Right ventricle myocardium inferior (tissue), 1 donor: ENCODE measurements at regions of chr3 and their contacts with region 1.

Region 1: DNA sequence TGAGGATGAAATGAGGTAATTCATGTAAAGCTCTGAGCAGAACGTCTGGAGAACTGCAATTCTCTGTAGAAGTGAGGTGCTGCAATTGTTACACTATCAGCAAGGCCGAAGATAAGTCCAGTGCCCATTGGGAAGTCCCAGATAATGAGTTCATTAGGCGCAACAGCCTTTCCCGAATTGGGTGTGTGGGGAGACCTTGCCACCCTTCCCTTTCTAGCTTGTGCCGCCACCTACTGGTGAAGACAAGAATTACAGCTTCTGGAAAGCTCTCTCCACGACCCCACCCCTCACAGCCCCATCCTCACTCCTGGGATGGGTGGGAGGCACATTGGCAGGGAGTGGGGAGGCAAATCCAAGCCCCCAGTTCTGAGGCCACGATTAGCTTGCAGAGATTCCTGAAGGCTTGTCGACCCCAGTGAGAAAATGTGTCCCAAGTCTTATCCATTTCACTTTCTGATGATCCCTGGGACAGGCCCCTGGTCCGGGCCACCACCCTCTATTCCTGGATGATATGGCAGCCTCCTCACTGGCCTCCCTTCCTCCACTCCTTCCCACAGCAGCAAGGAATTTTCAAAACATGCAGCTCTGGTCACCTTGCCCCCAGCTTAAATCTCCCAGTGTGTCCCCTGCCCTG is 36.4 kb downstream of the FAM3D start:
- DNase-seq: no peak
- ATAC-seq: peak; percentile 49

Region 2: DNA sequence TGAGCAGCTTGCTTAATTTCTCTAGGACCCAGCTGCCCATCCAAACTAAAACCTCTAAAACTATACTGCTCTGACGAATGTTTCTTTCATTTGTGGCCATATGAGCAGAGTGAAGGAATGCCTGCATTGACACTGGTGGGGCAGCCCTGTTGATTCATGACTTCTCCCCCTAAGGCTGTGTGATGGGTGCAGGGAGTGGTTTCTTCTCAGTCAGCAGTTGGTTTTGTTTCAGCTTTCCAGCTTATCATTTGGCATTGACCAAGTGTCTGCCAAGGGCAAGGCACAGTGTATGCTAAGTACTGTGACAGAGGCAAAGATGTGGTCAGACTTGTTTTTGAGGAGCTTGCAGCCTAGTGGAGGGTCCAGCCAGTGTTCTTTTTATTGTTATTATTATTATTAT is 387.9 kb before region 1 on chr3:
- intact Hi-C with region 1: no loop called
- DNase-seq: no peak
- ATAC-seq: peak; percentile 51

Region 3: GRCh38 chr3:58305882-58306711 is 324.1 kb before region 1 on chr3 and contains the starts of genes HTD2 and RPP14:
- intact Hi-C with region 1: loop called (anchors 5 kb)
- DNase-seq: peak; percentile 100
- ATAC-seq: peak; percentile 96
- total RNA-seq, gene HTD2: 14.7 TPM
- total RNA-seq, gene RPP14: 23.2 TPM

Region 4: DNA sequence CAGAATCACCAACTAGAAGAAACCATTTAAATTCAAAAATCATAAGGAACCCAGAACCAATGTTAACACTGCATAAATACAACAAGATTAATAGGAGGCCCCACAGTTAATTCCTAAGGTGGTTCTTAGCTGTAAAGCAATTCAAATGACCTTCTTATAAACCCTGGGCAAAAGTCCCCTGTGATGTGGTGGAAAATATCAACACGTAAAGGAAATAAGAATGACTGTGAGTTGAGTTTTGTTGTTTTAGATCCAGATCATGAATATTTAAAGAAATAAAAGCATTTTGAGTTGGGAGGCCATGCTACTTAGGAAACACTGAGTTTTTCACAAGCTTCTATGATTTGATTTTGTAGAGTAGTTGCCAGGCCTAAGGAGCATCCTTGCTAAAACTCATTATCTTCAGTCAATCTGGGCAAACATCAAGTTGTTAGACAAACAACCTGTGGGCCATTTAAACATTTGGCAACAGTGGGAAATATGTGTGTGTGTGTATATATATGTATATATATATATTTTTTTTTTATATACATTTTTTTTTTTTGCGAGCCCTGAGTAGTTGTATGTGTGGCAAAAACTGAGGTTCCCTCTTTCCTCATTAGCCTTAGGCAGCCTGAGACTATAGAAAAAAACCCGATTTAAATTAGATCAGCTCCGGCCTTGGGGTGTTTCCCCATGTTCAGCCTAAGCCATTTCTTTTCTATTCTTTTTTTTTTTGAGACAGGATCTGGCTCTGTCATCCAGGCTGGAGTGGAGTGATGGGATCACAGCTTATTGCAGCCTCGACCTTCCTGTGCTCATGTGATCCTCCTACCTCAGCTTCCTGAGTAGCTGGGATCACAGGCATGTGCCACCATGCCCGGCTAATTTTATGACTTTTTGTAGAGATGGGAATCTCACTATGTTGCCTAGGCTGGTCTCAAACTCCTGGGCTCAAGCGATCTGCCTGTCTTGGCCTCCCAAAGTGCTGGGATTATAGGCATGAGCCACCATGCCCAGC is 305.5 kb before region 1 on chr3:
- intact Hi-C with region 1: loop called (anchors 5 kb)
- DNase-seq: no peak
- ATAC-seq: no peak

Region 5: GRCh38 chr3:58452176-58452575 is 178.0 kb before region 1 on chr3:
- intact Hi-C with region 1: no loop called
- DNase-seq: no peak
- ATAC-seq: no peak

Region 6: DNA sequence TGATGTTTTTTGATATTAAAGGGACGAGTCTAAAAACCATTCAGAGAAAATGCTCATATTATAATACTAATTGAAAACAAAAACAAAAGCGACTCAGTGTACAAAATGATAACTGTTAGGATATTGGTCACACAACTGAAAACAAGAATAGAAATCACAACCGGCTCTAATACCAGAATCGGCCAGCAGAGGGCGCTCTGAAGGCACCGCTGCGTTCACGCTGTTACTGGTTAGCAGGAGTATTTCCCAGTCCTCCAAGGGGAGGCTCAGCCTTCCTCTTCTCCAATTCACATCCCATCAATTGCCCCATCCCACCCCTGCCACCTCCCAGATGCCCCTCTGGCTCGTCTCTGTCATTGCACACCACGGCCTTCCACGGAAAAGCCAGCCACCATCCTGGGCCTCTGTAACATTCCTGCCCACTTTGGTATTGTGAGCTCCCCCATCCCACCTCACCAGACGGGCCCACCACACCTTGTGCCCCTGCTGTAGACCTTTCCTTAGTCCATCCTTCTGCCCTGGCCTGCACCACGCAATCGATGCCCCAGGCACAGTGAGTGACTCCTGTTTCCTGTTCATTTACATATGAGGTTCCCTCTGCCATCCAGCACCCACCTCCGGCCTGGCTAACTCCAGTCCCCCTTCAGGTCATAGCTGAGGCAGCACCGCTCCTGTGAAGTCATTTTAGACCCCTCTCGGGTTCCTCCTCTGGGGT is 61.5 kb before region 1 on chr3:
- intact Hi-C with region 1: loop called (anchors 1 kb)
- DNase-seq: peak; percentile 86
- ATAC-seq: peak; percentile 40

Region 7: DNA sequence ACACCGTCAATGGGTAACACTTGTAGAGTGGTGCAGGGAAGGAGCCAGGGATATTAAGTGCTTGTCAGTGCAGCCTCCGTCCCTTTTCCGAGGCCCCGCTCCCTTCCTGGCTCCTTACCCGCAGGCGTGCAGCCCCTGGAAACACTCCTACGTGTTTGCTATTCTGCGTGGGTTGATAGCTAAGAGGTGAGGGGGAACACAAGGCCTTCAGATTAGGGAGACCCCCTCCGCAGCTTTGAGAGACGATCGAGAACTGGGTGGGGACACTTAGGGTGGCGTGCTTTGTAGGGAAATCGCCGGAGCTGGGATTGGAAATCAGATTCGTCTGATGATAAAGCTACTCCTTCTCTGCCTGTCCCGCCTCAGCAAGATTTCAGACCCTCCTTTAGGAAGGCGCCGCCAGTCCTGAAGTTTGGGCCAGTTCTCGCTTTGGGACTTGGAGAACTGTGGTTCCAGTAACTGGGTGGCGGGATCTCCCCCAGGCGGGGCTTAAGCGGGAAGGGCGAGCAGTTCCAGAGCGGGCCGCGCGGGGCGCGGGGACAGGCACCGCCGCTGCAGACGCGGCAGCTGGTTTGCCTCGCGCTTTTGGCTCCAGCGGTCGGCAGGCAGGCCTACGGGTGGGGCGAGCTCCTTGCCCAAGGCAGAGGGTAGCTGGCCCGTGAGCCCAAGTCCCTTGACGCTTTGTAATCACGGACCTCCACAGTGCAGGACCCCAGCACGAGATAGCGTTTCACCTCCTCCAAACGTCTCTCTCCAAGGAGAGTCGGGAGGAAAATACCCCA is 45.0 kb before region 1 on chr3:
- intact Hi-C with region 1: loop called (anchors 1 kb)
- DNase-seq: peak; percentile 93
- ATAC-seq: peak; percentile 96

Region 8: GRCh38 chr3:58609990-58610389 is 20.2 kb before region 1 on chr3:
- intact Hi-C with region 1: loop called (anchors 2 kb)
- DNase-seq: no peak
- ATAC-seq: peak; percentile 24